ENCODE measurements at regions of chr6 and their contacts with region 1.

Region 1: DNA sequence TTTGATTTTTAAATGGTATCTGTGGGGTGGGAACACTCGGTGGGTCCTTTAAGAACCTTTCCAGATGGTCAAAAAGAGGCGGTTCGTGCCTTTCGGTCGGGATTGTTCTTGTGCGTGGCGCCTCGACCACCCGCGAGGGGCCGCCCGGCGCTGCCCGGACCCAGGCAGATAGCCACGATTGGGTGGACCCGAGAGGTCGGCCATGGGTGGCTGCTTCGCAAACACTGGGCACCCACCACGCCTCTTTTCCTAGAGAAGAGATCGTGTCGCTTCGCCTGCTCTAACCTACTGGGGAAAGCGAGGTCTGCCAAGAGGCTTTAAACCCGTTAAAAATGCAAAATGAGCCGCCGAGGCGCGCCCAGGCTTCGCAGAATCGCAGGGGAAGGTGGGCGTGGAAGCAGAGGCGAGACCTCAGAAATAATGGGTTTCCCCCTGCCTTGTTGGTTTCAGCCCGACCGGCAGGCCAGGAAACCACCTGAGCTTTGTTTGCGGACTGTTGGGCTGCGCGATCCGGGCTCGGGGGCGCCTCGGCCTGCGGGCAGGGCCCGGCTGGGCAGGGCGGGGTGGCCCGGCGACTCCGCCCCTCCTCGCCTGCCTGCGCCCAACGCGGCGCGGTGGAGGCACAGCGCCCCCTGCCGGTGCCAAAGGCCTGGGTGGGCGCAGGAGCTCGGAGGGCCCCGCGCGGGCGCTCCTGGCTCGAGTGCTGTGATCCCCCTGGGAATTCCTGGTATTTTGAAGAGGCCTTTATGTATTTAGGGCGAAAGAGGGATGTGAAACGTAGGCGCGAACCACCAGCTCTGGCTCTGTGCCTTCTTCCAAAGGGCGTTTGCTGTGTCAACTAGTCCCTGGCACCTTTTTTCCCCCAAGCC is 1.6 kb downstream of the MARCKS start:
- DNase-seq: peak; percentile 98
- ATAC-seq: peak; percentile 76
- H3K4me3 Mint-ChIP-seq: no peak overlapping the region
- H3K27ac Mint-ChIP-seq: peak overlapping the region; percentile 85
- H3K4me1 Mint-ChIP-seq: peaks cover 23% of the 10 kb centered on the region
- H3K27me3 Mint-ChIP-seq: no peaks in the 10 kb centered on the region
- CTCF ChIP-seq: peak; percentile 88

Region 2: DNA sequence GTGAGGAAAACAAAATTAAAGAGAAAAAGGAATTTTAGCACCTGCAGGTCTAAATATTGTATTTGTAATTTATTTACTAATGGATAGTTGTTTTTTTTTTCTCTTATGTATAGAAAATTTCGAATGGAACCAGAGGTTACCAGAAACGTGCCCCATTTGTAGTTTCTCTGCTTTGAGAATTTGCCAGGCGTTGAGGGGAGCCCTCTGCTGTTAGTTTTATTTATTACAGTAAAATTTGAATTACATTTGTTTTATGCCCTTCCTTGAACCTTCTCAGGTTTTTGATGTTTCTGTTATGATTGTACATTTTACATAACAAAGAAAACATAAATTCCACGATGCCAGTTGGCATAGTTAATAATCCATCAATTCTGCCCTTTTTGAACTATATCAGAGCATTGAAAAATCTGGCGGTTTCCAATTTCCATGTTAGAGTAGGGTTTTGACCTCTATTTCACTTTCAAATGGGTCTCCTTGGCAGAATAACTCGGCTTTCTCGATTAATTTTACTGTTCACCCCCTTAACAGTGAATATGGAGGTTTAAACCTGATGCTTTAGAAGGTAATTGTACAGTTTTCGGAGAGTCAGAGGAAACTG is 1546.7 kb before region 1 on chr6:
- CTCF ChIA-PET with region 1: no interaction called
- POLR2A ChIA-PET with region 1: interaction called, 5 read pairs
- intact Hi-C with region 1: loop called (anchors 5 kb)
- DNase-seq: no peak
- ATAC-seq: no peak
- H3K4me3 Mint-ChIP-seq: no peak overlapping the region
- H3K27ac Mint-ChIP-seq: no peak overlapping the region
- H3K4me1 Mint-ChIP-seq: peaks cover 12% of the 10 kb centered on the region
- H3K27me3 Mint-ChIP-seq: no peaks in the 10 kb centered on the region
- CTCF ChIP-seq: no peak

Region 3: GRCh38 chr6:113381959-113382358 is 476.8 kb before region 1 on chr6:
- CTCF ChIA-PET with region 1: interaction called, 3 read pairs
- POLR2A ChIA-PET with region 1: interaction called, 6 read pairs
- intact Hi-C with region 1: loop called (anchors 1 kb)
- DNase-seq: no peak
- ATAC-seq: peak; percentile 75
- H3K4me3 Mint-ChIP-seq: no peak overlapping the region
- H3K27ac Mint-ChIP-seq: no peak overlapping the region
- H3K4me1 Mint-ChIP-seq: peaks cover 7% of the 10 kb centered on the region
- H3K27me3 Mint-ChIP-seq: peaks cover 10% of the 10 kb centered on the region
- CTCF ChIP-seq: no peak

Region 4: GRCh38 chr6:113632220-113632864 is 226.4 kb before region 1 on chr6:
- CTCF ChIA-PET with region 1: interaction called, 44 read pairs
- POLR2A ChIA-PET with region 1: interaction called, 122 read pairs
- intact Hi-C with region 1: loop called (anchors 1 kb)
- DNase-seq: no peak
- ATAC-seq: peak; percentile 32
- H3K4me3 Mint-ChIP-seq: peak overlapping the region; percentile 87
- H3K27ac Mint-ChIP-seq: peak overlapping the region; percentile 99
- H3K4me1 Mint-ChIP-seq: peaks cover 88% of the 10 kb centered on the region
- H3K27me3 Mint-ChIP-seq: no peaks in the 10 kb centered on the region
- CTCF ChIP-seq: no peak

Region 5: DNA sequence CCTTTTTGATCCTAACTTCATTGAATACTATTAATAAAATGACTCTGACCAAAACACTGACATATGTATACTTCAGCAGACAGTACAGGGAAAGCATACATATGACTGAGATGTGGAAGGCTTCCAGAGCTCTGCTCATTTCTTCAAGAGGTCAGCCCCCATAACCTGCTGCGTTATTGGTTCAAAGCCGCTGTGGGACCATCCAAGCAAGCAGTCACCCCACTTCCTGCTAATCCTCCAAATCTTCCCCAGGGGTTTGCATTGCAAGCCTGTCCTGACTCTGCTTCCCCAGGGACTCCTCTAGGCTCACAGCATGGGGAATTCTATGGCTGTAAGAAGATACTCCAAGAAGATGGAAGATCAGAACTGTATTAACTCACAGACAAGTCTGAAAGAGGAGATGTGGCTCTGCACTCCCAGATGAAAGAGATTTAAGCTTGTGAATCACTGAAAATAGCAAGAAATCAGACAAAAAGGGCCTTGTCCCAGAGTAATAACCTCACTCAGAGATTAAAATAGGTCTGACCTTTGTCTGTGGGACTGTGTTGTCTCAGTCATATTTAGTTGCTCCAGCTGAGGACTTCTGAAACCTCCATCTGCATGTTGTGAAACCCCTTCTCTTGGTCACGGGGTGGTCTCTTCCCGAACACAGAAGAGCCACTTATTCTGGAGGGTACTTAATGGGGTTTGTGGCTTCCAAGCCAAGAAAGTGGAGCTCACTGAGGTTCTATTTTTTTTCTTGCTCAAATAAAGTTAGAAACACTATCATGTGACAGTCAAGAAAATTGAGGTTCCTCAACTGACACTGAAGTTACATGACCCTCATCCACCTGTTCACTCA is 103.0 kb before region 1 on chr6:
- CTCF ChIA-PET with region 1: interaction called, 6 read pairs
- POLR2A ChIA-PET with region 1: interaction called, 12 read pairs
- intact Hi-C with region 1: loop called (anchors 2 kb)
- DNase-seq: peak; percentile 25
- ATAC-seq: peak; percentile 86
- H3K4me3 Mint-ChIP-seq: peak overlapping the region; percentile 60
- H3K27ac Mint-ChIP-seq: peak overlapping the region; percentile 82
- H3K4me1 Mint-ChIP-seq: peaks cover 46% of the 10 kb centered on the region
- H3K27me3 Mint-ChIP-seq: no peaks in the 10 kb centered on the region
- CTCF ChIP-seq: no peak

Region 6: GRCh38 chr6:113879186-113880096 is 20.7 kb after region 1 on chr6:
- CTCF ChIA-PET with region 1: interaction called, 22 read pairs
- POLR2A ChIA-PET with region 1: interaction called, 9 read pairs
- intact Hi-C with region 1: loop called (anchors 1 kb)
- DNase-seq: no peak
- ATAC-seq: peak; percentile 100
- H3K4me3 Mint-ChIP-seq: no peak overlapping the region
- H3K27ac Mint-ChIP-seq: no peak overlapping the region
- H3K4me1 Mint-ChIP-seq: peaks cover 7% of the 10 kb centered on the region
- H3K27me3 Mint-ChIP-seq: peaks cover 5% of the 10 kb centered on the region
- CTCF ChIP-seq: no peak